Mammary epithelial cell (primary cell): ENCODE measurements at regions of chr6 and their contacts with region 1.

Region 1: GRCh38 chr6:75208298-75209183 is 2.7 kb upstream of the COL12A1 start:
- DNase-seq: peak; percentile 71
- H3K4me3 ChIP-seq: no peak overlapping the region
- H3K27ac ChIP-seq: no peak overlapping the region
- H3K4me1 ChIP-seq: peaks cover 9% of the 10 kb centered on the region
- H3K27me3 ChIP-seq: no peaks in the 10 kb centered on the region
- CTCF ChIP-seq: peak; percentile 86 to 90

Region 2: DNA sequence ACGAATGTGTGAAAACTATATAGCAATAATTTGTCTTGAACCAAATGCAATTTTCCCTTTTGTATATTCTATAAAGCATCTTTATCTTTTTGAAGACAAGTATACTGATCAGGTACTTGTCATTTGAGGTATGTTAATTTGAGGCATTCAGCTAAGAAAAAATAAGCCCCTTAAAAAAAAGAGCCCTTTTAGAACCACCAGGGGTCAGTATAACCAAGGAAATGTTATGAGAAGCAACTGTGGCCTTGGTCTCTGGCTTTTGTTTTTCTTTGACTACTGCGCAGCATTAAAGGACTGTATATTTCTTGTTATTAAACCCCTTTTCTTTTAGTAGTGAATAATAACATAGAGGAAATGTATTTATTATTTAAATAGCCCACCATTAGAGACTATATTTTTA is 1469.4 kb before region 1 on chr6:
- CTCF ChIA-PET with region 1: interaction called, 3 read pairs
- dilution Hi-C with region 1: no loop called
- in situ Hi-C with region 1: no loop called
- intact Hi-C with region 1: loop called (anchors 1 kb)
- DNase-seq: peak; percentile 23
- H3K4me3 ChIP-seq: no peak overlapping the region
- H3K27ac ChIP-seq: no peak overlapping the region
- H3K4me1 ChIP-seq: no peaks in the 10 kb centered on the region
- H3K27me3 ChIP-seq: no peaks in the 10 kb centered on the region
- CTCF ChIP-seq: peak; percentile 58 to 62

Region 3: DNA sequence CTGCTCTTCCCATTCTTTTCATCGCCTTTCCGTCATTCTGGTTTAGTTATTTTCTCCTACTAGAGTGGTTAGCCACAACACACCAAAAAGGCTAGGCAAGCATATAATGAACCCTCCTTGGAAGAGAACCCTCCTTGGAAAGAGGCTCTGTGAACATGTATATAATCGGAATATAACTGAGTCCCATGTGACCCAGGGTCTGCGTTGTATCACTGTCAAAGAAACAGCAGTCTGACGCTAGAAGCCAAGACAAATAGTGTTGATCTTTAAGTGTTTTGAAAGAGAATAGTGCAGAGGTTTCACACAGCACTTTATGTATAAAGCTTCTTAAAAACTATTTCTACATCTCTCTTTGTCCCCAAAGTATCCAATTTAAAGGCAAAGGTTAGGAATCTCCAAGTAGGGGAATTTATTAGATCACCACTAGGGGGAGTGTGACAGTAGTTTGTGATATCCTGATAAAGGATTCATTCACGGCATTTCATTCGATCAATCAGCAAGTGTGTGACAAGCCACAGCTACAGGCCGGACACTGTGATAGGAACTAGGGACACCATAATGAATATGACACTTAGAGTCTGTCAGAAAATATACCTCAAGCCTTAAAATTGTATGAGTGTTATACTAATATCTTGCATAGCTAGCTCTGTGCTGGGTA is 1117.3 kb before region 1 on chr6:
- CTCF ChIA-PET with region 1: no interaction called
- dilution Hi-C with region 1: no loop called
- in situ Hi-C with region 1: loop called (anchors 10 to 25 kb)
- intact Hi-C with region 1: loop called (anchors 2 kb)
- DNase-seq: peak; percentile 20
- H3K4me3 ChIP-seq: no peak overlapping the region
- H3K27ac ChIP-seq: no peak overlapping the region
- H3K4me1 ChIP-seq: no peaks in the 10 kb centered on the region
- H3K27me3 ChIP-seq: no peaks in the 10 kb centered on the region
- CTCF ChIP-seq: peak; percentile 70 to 73

Region 4: DNA sequence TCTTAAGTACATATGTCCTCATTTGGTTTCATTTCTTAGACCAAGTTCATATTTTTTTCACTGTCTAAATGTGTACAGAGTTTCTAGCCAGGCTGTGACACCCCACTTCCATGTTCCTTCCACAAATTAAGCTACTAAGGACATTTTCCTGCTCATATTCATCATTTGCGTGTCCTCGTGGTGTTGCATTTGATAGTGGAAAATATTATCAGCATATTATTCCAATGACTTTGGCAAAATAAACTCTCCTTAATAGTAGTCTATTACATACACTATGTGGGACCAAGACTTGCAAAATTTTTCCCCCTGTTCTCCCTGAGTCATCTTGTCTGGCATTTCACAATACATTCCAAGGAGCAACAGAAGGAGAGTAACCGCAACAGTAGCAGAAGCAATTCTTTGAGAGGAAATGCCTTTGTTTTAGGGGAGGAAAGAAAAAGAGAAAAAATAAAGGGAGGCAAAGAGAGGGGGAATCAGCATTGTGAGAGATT is 601.9 kb before region 1 on chr6:
- CTCF ChIA-PET with region 1: no interaction called
- dilution Hi-C with region 1: no loop called
- in situ Hi-C with region 1: no loop called
- intact Hi-C with region 1: loop called (anchors 10 kb)
- DNase-seq: peak; percentile 85
- H3K4me3 ChIP-seq: peak overlapping the region in 2 of 3 experiments; percentile 7 to 18
- H3K27ac ChIP-seq: no peak overlapping the region
- H3K4me1 ChIP-seq: peaks cover 43% of the 10 kb centered on the region
- H3K27me3 ChIP-seq: no peaks in the 10 kb centered on the region
- CTCF ChIP-seq: no peak

Region 5: DNA sequence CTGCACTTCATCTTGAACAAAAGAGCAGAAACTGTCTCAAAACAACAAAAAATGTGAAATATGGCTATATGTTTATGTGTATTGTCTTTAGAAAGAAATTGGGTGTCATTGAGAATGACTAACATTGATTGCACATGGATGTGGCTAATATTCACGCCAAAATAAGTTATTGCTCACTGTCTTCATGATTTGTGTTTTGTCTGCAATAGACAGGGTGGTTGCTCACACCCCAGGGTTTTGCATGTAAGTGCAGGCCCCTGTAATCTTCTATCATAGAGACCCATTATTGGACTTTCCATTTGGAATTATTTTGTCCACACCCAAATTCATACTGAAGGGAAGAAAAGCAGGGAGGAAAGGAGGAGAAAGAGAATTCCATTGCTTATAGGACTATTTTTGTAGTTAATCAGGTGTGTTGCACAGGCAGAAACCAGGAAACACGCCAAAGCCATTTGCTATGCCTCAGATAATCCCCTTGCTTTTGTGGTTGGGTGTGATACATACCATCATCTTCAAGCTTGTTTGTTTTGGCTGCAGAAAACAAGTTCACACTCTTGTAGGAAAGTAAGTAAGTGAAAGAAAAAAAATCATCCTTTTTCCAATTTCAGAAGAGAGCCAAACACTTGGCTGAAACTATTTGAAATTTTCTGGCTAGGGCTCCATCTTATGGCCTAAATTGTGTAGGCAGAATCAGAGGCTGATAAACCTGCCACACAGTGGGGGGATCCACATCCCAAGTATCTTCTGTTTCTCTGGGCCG is 216.8 kb before region 1 on chr6:
- CTCF ChIA-PET with region 1: no interaction called
- dilution Hi-C with region 1: no loop called
- in situ Hi-C with region 1: no loop called
- intact Hi-C with region 1: loop called (anchors 5 kb)
- DNase-seq: peak; percentile 92
- H3K4me3 ChIP-seq: no peak overlapping the region
- H3K27ac ChIP-seq: peak overlapping the region; percentile 93
- H3K4me1 ChIP-seq: peaks cover 25% of the 10 kb centered on the region
- H3K27me3 ChIP-seq: no peaks in the 10 kb centered on the region
- CTCF ChIP-seq: peak in 1 of 2 donors; percentile 39

Region 6: GRCh38 chr6:75230484-75231325 is 22.2 kb after region 1 on chr6:
- CTCF ChIA-PET with region 1: no interaction called
- dilution Hi-C with region 1: no loop called
- in situ Hi-C with region 1: no loop called
- intact Hi-C with region 1: loop called (anchors 1 kb)
- DNase-seq: peak; percentile 39
- H3K4me3 ChIP-seq: no peak overlapping the region
- H3K27ac ChIP-seq: no peak overlapping the region
- H3K4me1 ChIP-seq: no peaks in the 10 kb centered on the region
- H3K27me3 ChIP-seq: no peaks in the 10 kb centered on the region
- CTCF ChIP-seq: peak; percentile 75 to 83

Region 7: DNA sequence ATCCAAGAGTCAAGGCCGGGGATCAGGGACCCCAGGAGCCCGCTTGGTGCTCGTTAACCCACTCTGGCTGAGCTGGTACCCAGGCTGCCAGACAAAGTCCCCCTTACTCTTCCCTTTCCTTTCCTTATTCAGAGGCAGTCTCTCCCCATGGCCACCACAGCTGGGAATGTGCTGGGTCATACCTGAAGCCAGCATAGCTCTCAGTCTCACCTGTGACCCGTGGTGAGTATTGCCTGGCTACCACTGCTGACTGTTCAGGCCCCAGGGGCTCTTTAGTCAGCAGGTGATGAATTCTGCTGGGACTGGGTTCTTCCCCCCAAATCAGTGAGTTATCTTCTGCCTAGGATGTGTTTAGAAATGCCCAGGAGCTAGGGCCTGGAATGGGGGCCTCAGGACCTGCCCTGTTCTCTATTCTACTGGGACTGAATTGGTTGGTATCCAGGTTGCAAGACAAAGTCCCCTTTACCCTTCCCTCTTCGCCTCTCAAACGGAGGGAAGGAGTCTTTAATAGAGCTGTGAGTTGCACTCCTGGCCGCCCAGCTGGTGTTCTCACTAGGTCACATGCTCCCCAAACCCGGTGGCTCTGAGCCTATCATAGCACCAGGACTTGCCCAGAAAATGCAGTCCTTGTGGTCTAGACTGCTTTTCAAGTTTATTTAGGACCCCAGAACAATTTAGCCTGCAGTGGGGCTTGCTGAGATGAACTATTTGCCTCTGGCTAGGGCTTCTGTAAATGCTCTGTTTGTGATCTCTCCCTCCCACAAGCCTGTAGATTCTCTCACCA is 605.1 kb after region 1 on chr6:
- CTCF ChIA-PET with region 1: no interaction called
- dilution Hi-C with region 1: no loop called
- in situ Hi-C with region 1: no loop called
- intact Hi-C with region 1: no loop called
- DNase-seq: peak; percentile 68
- H3K4me3 ChIP-seq: no peak overlapping the region
- H3K27ac ChIP-seq: no peak overlapping the region
- H3K4me1 ChIP-seq: peaks cover 5% of the 10 kb centered on the region
- H3K27me3 ChIP-seq: no peaks in the 10 kb centered on the region
- CTCF ChIP-seq: no peak